AG04450 (cell line): ENCODE measurements at regions of chr5 and their contacts with region 1.

Region 1: GRCh38 chr5:17216176-17216973 is 1.1 kb upstream of the BASP1 start:
- DNase-seq: no peak
- H3K4me3 ChIP-seq: peak overlapping the region; percentile 66
- H3K27ac ChIP-seq: no peak overlapping the region
- H3K27me3 ChIP-seq: no peaks in the 10 kb centered on the region
- CTCF ChIP-seq: peak; percentile 89

Region 2: DNA sequence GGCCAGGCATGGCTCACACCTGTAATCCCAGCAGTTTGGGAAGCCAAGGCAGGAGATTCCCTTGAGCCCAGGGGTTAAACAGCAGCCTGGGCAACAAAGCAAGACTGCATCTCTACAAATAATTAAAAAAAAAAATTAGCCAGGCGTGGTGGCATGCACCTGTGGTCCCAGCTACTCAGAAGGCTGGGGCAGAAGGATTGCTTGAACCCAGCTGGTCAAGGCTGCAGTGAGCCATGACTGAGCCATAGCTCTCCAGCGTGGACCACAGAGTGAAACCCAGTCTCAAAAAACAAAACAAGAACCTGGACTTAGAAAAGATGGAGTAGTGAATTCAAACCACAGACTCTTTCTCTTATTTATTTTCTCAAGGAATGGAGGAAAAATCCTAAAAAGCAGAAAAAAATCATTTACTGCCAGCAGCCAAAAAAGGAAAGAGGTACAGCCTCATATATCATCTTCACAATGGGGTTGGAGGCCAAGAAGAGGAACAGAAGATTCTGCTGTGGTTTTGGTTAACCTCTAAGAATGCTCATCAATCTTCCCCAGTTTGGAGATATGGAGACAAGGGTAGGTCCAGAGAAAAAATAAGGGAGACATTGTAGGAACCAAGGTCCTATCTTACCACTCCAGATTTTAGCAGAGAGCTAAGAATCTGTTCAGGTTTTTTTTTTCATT is 240.3 kb before region 1 on chr5:
- CTCF ChIA-PET with region 1: no interaction called
- POLR2A ChIA-PET with region 1: no interaction called
- DNase-seq: no peak
- H3K4me3 ChIP-seq: no peak overlapping the region
- H3K27ac ChIP-seq: no peak overlapping the region
- H3K27me3 ChIP-seq: no peaks in the 10 kb centered on the region
- CTCF ChIP-seq: no peak

Region 3: GRCh38 chr5:17113163-17113958 is 103.0 kb before region 1 on chr5:
- CTCF ChIA-PET with region 1: no interaction called
- POLR2A ChIA-PET with region 1: interaction called, 10 read pairs
- DNase-seq: peak; percentile 15
- H3K4me3 ChIP-seq: no peak overlapping the region
- H3K27ac ChIP-seq: peak overlapping the region; percentile 48
- H3K27me3 ChIP-seq: no peaks in the 10 kb centered on the region
- CTCF ChIP-seq: no peak

Region 4: DNA sequence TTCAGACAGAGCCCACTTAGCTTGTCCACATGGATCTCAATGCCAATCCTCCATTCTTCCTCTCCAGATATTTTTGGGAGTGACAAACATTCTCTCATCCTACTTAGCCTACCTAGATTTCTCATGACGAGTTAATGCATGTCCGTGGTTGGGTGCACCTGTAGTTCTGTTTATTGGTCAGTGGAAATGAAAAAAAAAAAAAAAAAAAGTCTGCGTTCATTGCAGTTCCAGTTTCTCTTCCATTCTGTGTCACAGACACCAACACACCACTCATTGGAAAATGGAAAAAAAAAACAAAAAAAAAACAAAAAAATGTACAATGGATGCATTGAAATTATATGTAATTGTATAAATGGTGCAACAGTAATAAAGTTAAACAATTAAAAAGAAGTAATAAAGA is 60.1 kb after region 1 on chr5:
- CTCF ChIA-PET with region 1: interaction called, 13 read pairs
- POLR2A ChIA-PET with region 1: no interaction called
- DNase-seq: no peak
- H3K4me3 ChIP-seq: no peak overlapping the region
- H3K27ac ChIP-seq: no peak overlapping the region
- H3K27me3 ChIP-seq: no peaks in the 10 kb centered on the region
- CTCF ChIP-seq: no peak

Region 5: DNA sequence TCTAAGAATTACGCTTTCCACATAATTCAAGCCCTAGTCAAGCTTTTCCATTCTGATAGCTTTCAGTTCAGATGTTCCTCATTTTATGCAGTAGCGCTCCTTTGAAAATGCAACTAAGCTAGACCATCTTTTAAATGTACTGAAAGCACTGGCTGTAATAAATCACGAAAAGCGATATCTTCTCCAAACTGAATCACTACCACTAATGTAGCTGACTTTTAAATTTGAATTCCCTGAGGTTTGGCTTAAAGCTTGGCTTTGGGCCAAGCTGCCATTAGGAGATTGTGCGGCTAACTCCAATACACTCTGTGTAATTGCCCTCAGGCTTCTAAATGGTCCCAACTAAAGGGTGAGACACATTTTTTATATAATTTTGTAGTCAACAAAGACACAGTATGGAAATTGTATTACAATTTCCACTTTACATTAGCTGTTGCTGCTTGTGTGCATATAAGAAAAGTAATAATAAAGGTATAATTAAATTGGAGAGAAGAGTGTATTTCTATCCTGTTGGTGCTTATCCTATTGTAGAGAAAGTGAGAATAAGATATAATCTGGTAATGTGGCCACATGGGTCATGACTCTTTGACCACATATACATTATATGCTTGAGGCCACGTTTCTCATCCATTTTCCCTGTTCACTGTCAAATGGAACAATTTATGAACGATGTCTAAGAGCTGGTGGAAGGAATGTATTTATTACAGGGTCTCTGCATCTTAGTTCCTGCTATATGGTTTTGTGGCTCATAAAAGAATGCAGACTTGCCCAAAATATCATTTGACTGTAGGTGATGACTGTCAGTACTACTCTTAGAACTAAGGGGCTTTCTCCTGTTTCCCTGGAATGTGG is 163.0 kb after region 1 on chr5:
- CTCF ChIA-PET with region 1: interaction called, 23 read pairs
- POLR2A ChIA-PET with region 1: interaction called, 7 read pairs
- DNase-seq: no peak
- H3K4me3 ChIP-seq: no peak overlapping the region
- H3K27ac ChIP-seq: peak overlapping the region; percentile 25
- H3K27me3 ChIP-seq: no peaks in the 10 kb centered on the region
- CTCF ChIP-seq: no peak

Region 6: DNA sequence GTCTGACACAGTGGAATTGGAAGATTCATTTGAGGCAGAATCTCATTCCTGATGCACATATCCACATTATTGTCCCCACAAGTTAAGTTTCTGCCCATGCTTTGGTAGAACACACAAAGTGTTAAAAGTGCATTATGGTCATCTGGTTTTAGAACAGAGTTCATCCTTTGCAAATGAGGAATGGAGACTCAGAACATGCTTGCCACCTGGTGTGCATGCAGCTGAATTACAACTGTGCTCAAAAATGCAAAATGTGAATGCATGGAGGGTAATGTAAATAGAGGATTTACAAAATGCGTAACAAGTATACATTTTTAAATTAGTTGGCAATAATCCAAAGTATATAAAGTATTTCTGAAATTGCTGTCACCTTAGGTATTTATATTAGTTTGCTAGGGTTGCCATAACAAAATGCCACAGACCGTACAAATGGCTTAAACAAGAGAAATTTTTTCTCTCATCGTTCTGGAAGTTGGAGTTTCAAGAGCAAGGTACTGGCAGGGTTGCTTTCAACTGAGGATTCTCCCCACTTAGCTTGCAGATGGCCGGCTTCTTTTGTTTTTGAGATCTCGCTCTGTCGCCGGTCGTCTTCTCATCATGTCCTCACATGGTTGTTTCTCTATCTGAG is 1089.0 kb after region 1 on chr5:
- CTCF ChIA-PET with region 1: interaction called, 142 read pairs
- POLR2A ChIA-PET with region 1: interaction called, 3 read pairs
- DNase-seq: peak; percentile 10
- H3K4me3 ChIP-seq: no peak overlapping the region
- H3K27ac ChIP-seq: no peak overlapping the region
- H3K27me3 ChIP-seq: no peaks in the 10 kb centered on the region
- CTCF ChIP-seq: peak; percentile 81